GM12878 (cell line): ENCODE measurements at regions of chr18 and their contacts with region 1.

Region 1: DNA sequence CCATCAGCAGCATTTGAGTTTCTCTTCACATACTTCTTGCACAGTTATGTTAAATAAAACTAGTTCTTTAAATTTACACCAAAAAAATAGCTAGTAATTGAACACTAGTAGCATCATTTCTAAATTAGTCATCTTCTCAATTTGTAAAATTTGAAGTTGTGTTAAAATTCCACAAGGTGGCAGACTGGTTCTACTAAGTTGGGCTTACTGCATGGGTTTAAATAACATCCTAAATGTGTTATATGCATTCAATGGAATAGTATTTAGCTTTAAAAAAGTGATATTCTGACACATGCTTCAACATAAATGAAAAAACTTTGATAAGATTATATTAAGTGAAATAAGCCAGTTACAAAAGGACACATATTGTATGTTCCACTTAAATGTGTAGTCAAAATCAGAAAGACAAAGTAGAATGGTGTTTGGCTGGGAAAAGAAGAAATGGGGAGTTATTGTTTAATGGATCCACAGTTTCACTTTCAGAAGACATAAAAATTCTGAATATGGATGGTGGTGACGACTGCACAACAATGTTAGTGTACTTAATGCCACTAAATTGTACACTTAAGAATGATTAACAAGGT is 28.7 kb upstream of the RPRD1A start:
- DNase-seq: no peak
- ATAC-seq: peak; percentile 76
- H3K4me3 ChIP-seq: no peak overlapping the region
- H3K27ac ChIP-seq: no peak overlapping the region
- H3K4me1 ChIP-seq: no peaks in the 10 kb centered on the region
- H3K27me3 ChIP-seq: no peaks in the 10 kb centered on the region
- CTCF ChIP-seq: peak; percentile 33 to 67 (median 36); a peak in 4 of 6 replicates
- EP300 ChIP-seq: no peak
- POLR2A ChIP-seq: no peak
- RAD21 ChIP-seq: peak; percentile 83

Region 2: GRCh38 chr18:36015629-36016028 is 80.4 kb before region 1 on chr18:
- CTCF ChIA-PET with region 1: interaction called, 37 read pairs
- POLR2A ChIA-PET with region 1: no interaction called
- RAD21 ChIA-PET with region 1: interaction called, 25 read pairs
- SMC1A ChIA-PET with region 1: interaction called, 27 read pairs
- in situ Hi-C with region 1: no loop called
- intact Hi-C with region 1: loop called (anchors 1 kb)
- DNase-seq: peak; percentile 66
- ATAC-seq: peak; percentile 90
- H3K4me3 ChIP-seq: no peak overlapping the region
- H3K27ac ChIP-seq: no peak overlapping the region
- H3K4me1 ChIP-seq: peaks cover 14% of the 10 kb centered on the region
- H3K27me3 ChIP-seq: no peaks in the 10 kb centered on the region
- CTCF ChIP-seq: no peak
- EP300 ChIP-seq: peak in 1 of 2 experiments; percentile 93; a peak in 2 of 4 replicates
- POLR2A ChIP-seq: no peak
- RAD21 ChIP-seq: no peak

Region 3: GRCh38 chr18:36241831-36242230 is 145.8 kb after region 1 on chr18:
- CTCF ChIA-PET with region 1: no interaction called
- POLR2A ChIA-PET with region 1: no interaction called
- RAD21 ChIA-PET with region 1: no interaction called
- SMC1A ChIA-PET with region 1: no interaction called
- in situ Hi-C with region 1: no loop called
- intact Hi-C with region 1: no loop called
- DNase-seq: no peak
- ATAC-seq: no peak
- H3K4me3 ChIP-seq: no peak overlapping the region
- H3K27ac ChIP-seq: no peak overlapping the region
- H3K4me1 ChIP-seq: no peaks in the 10 kb centered on the region
- H3K27me3 ChIP-seq: no peaks in the 10 kb centered on the region
- CTCF ChIP-seq: no peak
- EP300 ChIP-seq: no peak
- POLR2A ChIP-seq: no peak
- RAD21 ChIP-seq: no peak

Region 4: DNA sequence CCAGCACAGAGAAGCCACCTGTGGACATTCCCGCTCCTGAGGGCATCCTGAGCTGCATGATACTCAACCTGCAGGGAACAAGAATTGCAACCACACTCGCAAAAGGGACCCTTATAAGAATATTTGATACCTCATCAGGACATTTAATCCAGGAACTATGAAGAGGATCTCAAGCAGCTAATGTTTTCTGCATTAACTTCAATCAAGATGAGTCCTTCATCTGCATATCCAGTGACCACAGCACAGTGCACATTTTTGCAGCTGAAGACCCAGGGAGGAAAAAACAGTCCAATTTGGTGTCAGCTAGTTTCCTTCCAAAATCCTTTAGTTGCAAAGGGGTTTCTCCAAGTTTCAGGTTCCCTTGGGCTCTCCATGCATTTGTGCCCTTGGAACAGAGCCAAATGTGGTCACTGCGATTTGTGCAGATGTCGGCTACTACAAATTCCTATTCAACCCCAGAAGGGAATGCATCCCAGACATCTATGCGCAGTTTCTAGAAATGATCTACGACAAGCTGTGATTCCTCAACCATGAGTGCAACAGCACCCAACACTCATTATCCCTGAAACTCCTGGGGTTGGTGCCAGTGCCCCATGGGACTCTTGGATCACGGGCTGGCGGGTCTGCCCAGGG is 178.2 kb after region 1 on chr18:
- CTCF ChIA-PET with region 1: interaction called, 10 read pairs
- POLR2A ChIA-PET with region 1: no interaction called
- RAD21 ChIA-PET with region 1: interaction called, 99 read pairs
- SMC1A ChIA-PET with region 1: interaction called, 167 read pairs
- in situ Hi-C with region 1: no loop called
- intact Hi-C with region 1: no loop called
- DNase-seq: no peak
- ATAC-seq: no peak
- H3K4me3 ChIP-seq: no peak overlapping the region
- H3K27ac ChIP-seq: no peak overlapping the region
- H3K4me1 ChIP-seq: no peaks in the 10 kb centered on the region
- H3K27me3 ChIP-seq: no peaks in the 10 kb centered on the region
- CTCF ChIP-seq: no peak
- EP300 ChIP-seq: no peak
- POLR2A ChIP-seq: no peak
- RAD21 ChIP-seq: no peak

Region 5: GRCh38 chr18:36757081-36757480 is 661.1 kb after region 1 on chr18:
- CTCF ChIA-PET with region 1: interaction called, 3 read pairs
- POLR2A ChIA-PET with region 1: no interaction called
- RAD21 ChIA-PET with region 1: no interaction called
- SMC1A ChIA-PET with region 1: no interaction called
- in situ Hi-C with region 1: no loop called
- intact Hi-C with region 1: loop called (anchors 5 kb)
- DNase-seq: no peak
- ATAC-seq: peak; percentile 48
- H3K4me3 ChIP-seq: no peak overlapping the region
- H3K27ac ChIP-seq: no peak overlapping the region
- H3K4me1 ChIP-seq: no peaks in the 10 kb centered on the region
- H3K27me3 ChIP-seq: no peaks in the 10 kb centered on the region
- CTCF ChIP-seq: peak; percentile 31 to 54 (median 38); a peak in 5 of 6 replicates
- EP300 ChIP-seq: no peak
- POLR2A ChIP-seq: no peak
- RAD21 ChIP-seq: peak; percentile 58